Heart right ventricle (tissue), 16 donors: ENCODE measurements at regions of chr4 and their contacts with region 1.

Region 1: DNA sequence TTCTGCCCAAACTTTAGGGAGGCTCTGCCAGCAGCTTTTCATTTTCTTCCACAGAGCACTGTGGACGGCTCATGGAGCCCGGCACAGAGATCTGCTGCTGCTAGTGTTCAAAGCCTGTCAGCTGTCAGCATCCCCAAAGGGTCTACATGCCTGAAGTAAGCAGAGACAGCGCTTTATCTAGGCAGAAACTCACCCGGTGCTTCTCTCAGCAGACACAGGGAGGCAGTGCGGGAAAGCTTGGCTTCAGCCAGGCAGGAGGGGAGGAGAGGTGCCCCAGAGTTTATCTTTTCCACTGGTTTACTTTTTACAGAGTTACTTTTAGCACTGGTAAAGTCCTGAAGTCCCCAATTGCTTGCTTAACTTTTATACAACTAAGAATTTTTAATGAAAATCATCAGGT is 339.3 kb downstream of the NKX6-1 start:
- DNase-seq: no peak
- ATAC-seq: no peak
- H3K4me3 ChIP-seq: no peak overlapping the region
- H3K27ac ChIP-seq: no peak overlapping the region
- H3K4me1 ChIP-seq: no peaks in the 10 kb centered on the region
- H3K27me3 ChIP-seq: peaks cover 0 to 33% (median 14%) of the 10 kb centered on the region in 7 donors
- CTCF ChIP-seq: no peak

Region 2: GRCh38 chr4:83189631-83190136 is 970.1 kb before region 1 on chr4:
- intact Hi-C with region 1: no loop called
- DNase-seq: no peak
- ATAC-seq: no peak
- H3K4me3 ChIP-seq: no peak overlapping the region
- H3K27ac ChIP-seq: no peak overlapping the region
- H3K4me1 ChIP-seq: peaks cover 0 to 6% (median 0%) of the 10 kb centered on the region in 9 donors
- H3K27me3 ChIP-seq: no peaks in the 10 kb centered on the region
- CTCF ChIP-seq: no peak

Region 3: GRCh38 chr4:83639849-83640493 is 519.8 kb before region 1 on chr4:
- intact Hi-C with region 1: no loop called
- DNase-seq: peak in 1 of 2 donors; percentile 68
- ATAC-seq: peak; percentile 42 to 89 (median 86)
- H3K4me3 ChIP-seq: no peak overlapping the region
- H3K27ac ChIP-seq: no peak overlapping the region
- H3K4me1 ChIP-seq: peaks cover 0 to 3% (median 0%) of the 10 kb centered on the region in 9 donors
- H3K27me3 ChIP-seq: no peaks in the 10 kb centered on the region
- CTCF ChIP-seq: peak; percentile 73 to 88 (median 83)

Region 4: GRCh38 chr4:83974156-83974780 is 185.5 kb before region 1 on chr4:
- intact Hi-C with region 1: no loop called
- DNase-seq: no peak
- ATAC-seq: no peak
- H3K4me3 ChIP-seq: no peak overlapping the region
- H3K27ac ChIP-seq: no peak overlapping the region
- H3K4me1 ChIP-seq: no peaks in the 10 kb centered on the region
- H3K27me3 ChIP-seq: peaks cover 0 to 5% (median 0%) of the 10 kb centered on the region in 7 donors
- CTCF ChIP-seq: no peak

Region 5: DNA sequence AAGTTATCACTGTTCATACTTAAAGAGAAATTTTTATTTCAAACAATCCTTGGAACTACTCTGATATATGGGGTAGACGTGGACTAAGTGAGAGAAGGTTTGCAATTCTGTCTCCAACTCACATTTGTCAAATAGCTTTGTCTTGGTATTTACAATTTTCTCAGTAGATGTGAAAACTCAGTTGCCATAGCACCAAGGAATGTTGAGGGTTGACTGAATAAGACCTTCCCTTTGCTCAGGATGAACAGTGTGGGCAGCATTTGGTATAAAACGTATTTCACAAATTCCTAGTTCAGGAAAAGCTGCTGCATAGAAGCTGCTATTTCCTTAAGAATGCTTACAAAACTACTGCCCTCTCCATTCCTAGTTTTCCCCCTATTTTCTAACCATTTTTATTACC is 60.2 kb before region 1 on chr4:
- intact Hi-C with region 1: no loop called
- DNase-seq: no peak
- ATAC-seq: no peak
- H3K4me3 ChIP-seq: no peak overlapping the region
- H3K27ac ChIP-seq: no peak overlapping the region
- H3K4me1 ChIP-seq: no peaks in the 10 kb centered on the region
- H3K27me3 ChIP-seq: no peaks in the 10 kb centered on the region
- CTCF ChIP-seq: no peak

Region 6: DNA sequence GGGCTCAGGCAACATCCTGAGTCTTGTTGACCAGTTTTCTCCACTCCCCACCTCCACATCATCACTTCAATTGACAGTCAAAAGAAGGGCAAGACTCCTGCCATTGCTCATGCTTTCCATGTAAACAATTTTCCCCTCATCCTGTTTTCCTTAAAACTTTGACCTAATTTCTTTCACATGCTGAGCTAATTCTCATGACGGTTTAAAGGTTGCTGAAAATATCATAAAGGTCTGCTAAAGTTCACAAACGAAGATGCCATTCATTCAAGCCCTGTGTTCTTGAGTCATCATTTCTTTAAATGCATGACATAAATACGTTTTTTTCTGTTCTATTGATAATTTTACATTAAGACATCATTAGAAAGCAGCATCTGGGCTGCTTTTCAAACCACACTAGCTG is 14.6 kb before region 1 on chr4:
- intact Hi-C with region 1: loop called in 1 of 10 experiments (anchors 1 kb)
- DNase-seq: no peak
- ATAC-seq: no peak
- H3K4me3 ChIP-seq: no peak overlapping the region
- H3K27ac ChIP-seq: no peak overlapping the region
- H3K4me1 ChIP-seq: no peaks in the 10 kb centered on the region
- H3K27me3 ChIP-seq: no peaks in the 10 kb centered on the region
- CTCF ChIP-seq: no peak

Region 7: GRCh38 chr4:84218031-84218430 is 58.3 kb after region 1 on chr4:
- intact Hi-C with region 1: loop called in 1 of 10 experiments (anchors 10 kb)
- DNase-seq: no peak
- ATAC-seq: no peak
- H3K4me3 ChIP-seq: no peak overlapping the region
- H3K27ac ChIP-seq: no peak overlapping the region
- H3K4me1 ChIP-seq: no peaks in the 10 kb centered on the region
- H3K27me3 ChIP-seq: no peaks in the 10 kb centered on the region
- CTCF ChIP-seq: no peak